PC-3 (cell line): ENCODE measurements at regions of chr6 and their contacts with region 1.

Region 1: DNA sequence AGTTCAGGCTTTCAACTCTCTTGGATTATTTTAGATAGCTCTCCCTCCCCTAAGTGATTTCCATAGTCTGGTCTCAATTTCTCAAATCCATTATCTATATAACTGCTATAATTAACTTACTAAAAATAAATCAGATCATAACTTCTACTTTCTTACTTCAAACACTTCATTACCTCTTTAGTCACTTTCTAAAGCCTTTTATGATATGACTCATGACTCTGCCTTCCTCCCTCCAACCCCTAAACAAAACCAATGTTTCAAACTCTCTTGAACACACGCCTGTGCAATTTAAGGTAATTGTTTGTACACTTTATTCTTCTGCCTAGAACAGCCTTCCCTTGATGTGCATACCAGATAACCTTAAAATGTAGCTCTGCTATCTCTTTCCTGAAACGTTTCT is 100.5 kb downstream of the LMBRD1 start:
- DNase-seq: peak; percentile 17
- ATAC-seq: peak; percentile 58
- H3K4me3 ChIP-seq: no peak overlapping the region
- H3K27ac ChIP-seq: no peak overlapping the region
- H3K4me1 ChIP-seq: no peaks in the 10 kb centered on the region
- H3K27me3 ChIP-seq: no peaks in the 10 kb centered on the region
- CTCF ChIP-seq: no peak

Region 2: GRCh38 chr6:69593706-69594105 is 102.6 kb before region 1 on chr6:
- CTCF ChIA-PET with region 1: no interaction called
- POLR2A ChIA-PET with region 1: no interaction called
- intact Hi-C with region 1: loop called (anchors 5 kb)
- DNase-seq: peak; percentile 51
- ATAC-seq: peak; percentile 76
- H3K4me3 ChIP-seq: peak overlapping the region; percentile 11; the same call in 1 of the 2 replicates
- H3K27ac ChIP-seq: peak overlapping the region; percentile 75
- H3K4me1 ChIP-seq: peaks cover 20% of the 10 kb centered on the region
- H3K27me3 ChIP-seq: no peaks in the 10 kb centered on the region
- CTCF ChIP-seq: no peak